ENCODE measurements at regions of chr5 and their contacts with region 1.

Region 1: GRCh38 chr5:73229209-73229661 is 56.2 kb downstream of the TMEM174 start:
- DNase-seq: peak; percentile 38
- H3K4me3 Mint-ChIP-seq: no peak overlapping the region
- H3K27ac Mint-ChIP-seq: no peak overlapping the region
- H3K4me1 Mint-ChIP-seq: no peaks in the 10 kb centered on the region
- H3K27me3 Mint-ChIP-seq: peaks cover 16% of the 10 kb centered on the region
- CTCF ChIP-seq: no peak

Region 2: GRCh38 chr5:72988769-72989168 is 240.5 kb before region 1 on chr5:
- CTCF ChIA-PET with region 1: no interaction called
- intact Hi-C with region 1: no loop called
- DNase-seq: peak; percentile 9
- H3K4me3 Mint-ChIP-seq: no peak overlapping the region
- H3K27ac Mint-ChIP-seq: no peak overlapping the region
- H3K4me1 Mint-ChIP-seq: no peaks in the 10 kb centered on the region
- H3K27me3 Mint-ChIP-seq: no peaks in the 10 kb centered on the region
- CTCF ChIP-seq: no peak

Region 3: GRCh38 chr5:73327908-73328455 is 98.7 kb after region 1 on chr5:
- CTCF ChIA-PET with region 1: no interaction called
- intact Hi-C with region 1: no loop called
- DNase-seq: no peak
- H3K4me3 Mint-ChIP-seq: no peak overlapping the region
- H3K27ac Mint-ChIP-seq: no peak overlapping the region
- H3K4me1 Mint-ChIP-seq: no peaks in the 10 kb centered on the region
- H3K27me3 Mint-ChIP-seq: peaks cover 40% of the 10 kb centered on the region
- CTCF ChIP-seq: no peak

Region 4: DNA sequence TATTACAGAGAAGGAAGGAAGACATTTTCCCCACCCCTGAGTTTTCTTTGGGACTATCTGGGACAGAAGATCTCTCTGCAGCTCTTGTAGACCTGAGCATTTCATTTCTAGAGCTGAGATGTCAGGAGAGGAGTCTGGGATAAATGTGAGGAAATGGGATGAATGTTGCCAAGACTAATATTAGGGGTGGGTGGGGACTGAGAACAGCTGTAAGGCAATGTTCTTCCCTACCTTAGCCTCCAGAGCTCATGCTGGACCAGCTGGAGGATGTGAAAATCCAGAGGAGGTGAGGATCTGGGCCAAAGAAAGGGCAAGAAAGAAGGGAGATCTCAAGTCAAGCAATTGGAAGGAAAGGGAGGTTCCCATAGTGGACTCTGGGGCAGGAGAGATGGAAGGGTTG is 242.4 kb after region 1 on chr5:
- CTCF ChIA-PET with region 1: interaction called, 10 read pairs
- intact Hi-C with region 1: no loop called
- DNase-seq: no peak
- H3K4me3 Mint-ChIP-seq: no peak overlapping the region
- H3K27ac Mint-ChIP-seq: no peak overlapping the region
- H3K4me1 Mint-ChIP-seq: no peaks in the 10 kb centered on the region
- H3K27me3 Mint-ChIP-seq: peaks cover under 1% of the 10 kb centered on the region
- CTCF ChIP-seq: no peak